AG04450 (cell line): ENCODE measurements at regions of chr9 and their contacts with region 1.

Region 1: GRCh38 chr9:130512199-130512598 is 67.2 kb upstream of the FUBP3 start:
- DNase-seq: no peak
- H3K4me3 ChIP-seq: no peak overlapping the region
- H3K27ac ChIP-seq: no peak overlapping the region
- H3K27me3 ChIP-seq: peaks cover 12% of the 10 kb centered on the region
- CTCF ChIP-seq: no peak

Region 2: GRCh38 chr9:130343445-130343918 is 168.7 kb before region 1 on chr9:
- CTCF ChIA-PET with region 1: no interaction called
- POLR2A ChIA-PET with region 1: interaction called, 12 read pairs
- DNase-seq: no peak
- H3K4me3 ChIP-seq: no peak overlapping the region
- H3K27ac ChIP-seq: no peak overlapping the region
- H3K27me3 ChIP-seq: peaks cover 11% of the 10 kb centered on the region
- CTCF ChIP-seq: peak; percentile 71

Region 3: GRCh38 chr9:130498298-130498917 is 13.8 kb before region 1 on chr9:
- CTCF ChIA-PET with region 1: no interaction called
- POLR2A ChIA-PET with region 1: no interaction called
- DNase-seq: no peak
- H3K4me3 ChIP-seq: no peak overlapping the region
- H3K27ac ChIP-seq: no peak overlapping the region
- H3K27me3 ChIP-seq: peaks cover 10% of the 10 kb centered on the region
- CTCF ChIP-seq: no peak